Activated B cell treated with CpG ODN at 0.5 μM for 24 hours (primary cell): ENCODE measurements at regions of chr12 and their contacts with region 1.

Region 1: DNA sequence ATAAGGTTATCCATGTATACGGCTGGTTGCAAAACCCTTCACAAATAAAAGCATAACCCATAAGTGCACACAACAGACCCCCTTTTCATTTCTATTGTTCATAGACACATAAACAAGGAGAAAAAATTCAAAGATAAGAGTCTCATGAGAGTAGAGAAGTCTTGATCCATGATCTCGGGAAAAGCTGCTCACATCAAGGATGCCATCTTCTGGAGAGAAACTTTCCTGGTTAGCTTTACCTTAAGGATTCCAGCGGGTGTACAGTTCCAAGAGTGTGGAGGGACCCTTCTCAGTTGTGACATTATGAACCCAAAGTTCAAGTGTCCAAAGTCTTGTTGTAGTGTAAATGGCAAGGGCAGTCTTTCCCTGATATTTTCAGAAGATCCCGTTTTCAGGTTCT is 144.5 kb downstream of the LLPH start:
- DNase-seq: no peak
- ATAC-seq: no peak
- H3K4me3 Mint-ChIP-seq: no peak overlapping the region
- H3K27ac Mint-ChIP-seq: no peak overlapping the region
- H3K4me1 Mint-ChIP-seq: no peaks in the 10 kb centered on the region
- H3K27me3 Mint-ChIP-seq: no peaks in the 10 kb centered on the region
- CTCF ChIP-seq: no peak

Region 2: GRCh38 chr12:65925626-65926025 is 60.4 kb before region 1 on chr12:
- CTCF ChIA-PET with region 1: no interaction called
- POLR2A ChIA-PET with region 1: no interaction called
- intact Hi-C with region 1: loop called (anchors 1 kb)
- DNase-seq: no peak
- ATAC-seq: no peak
- H3K4me3 Mint-ChIP-seq: peak overlapping the region; percentile 17
- H3K27ac Mint-ChIP-seq: no peak overlapping the region
- H3K4me1 Mint-ChIP-seq: peaks cover 24% of the 10 kb centered on the region
- H3K27me3 Mint-ChIP-seq: peaks cover 2% of the 10 kb centered on the region
- CTCF ChIP-seq: no peak

Region 3: GRCh38 chr12:66144791-66145754 is 159.0 kb after region 1 on chr12:
- CTCF ChIA-PET with region 1: no interaction called
- POLR2A ChIA-PET with region 1: no interaction called
- intact Hi-C with region 1: no loop called
- DNase-seq: no peak
- ATAC-seq: no peak
- H3K4me3 Mint-ChIP-seq: no peak overlapping the region
- H3K27ac Mint-ChIP-seq: peak overlapping the region; percentile 56
- H3K4me1 Mint-ChIP-seq: peaks cover 20% of the 10 kb centered on the region
- H3K27me3 Mint-ChIP-seq: no peaks in the 10 kb centered on the region
- CTCF ChIP-seq: no peak